CD4-positive, alpha-beta memory T cell (primary cell): ENCODE measurements at regions of chr10 and their contacts with region 1.

Region 1: DNA sequence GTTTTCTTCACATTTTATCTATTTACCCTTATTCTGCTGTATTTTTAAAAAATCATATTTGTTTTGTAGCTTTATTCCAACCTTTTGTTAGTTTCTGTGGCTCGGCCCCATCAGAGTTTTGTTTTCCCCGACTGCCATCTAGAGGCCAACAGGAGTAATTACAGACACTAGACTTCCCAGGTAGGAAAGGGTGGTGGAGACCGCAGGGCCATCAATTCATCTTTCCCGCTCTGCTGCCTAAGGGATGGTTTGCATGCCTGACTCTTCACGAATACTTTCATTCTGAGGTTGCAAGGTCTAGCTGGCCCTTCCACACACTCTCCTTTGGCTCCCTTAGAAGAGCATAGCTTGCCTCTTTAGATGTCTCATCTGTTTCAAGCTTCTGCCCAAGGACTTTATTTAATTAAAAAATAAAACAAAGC is 38.3 kb downstream of the LYZL2 start:
- DNase-seq: peak in 4 of 5 donors; percentile 48 to 60 (median 54)
- H3K4me3 ChIP-seq: no peak overlapping the region
- H3K4me3 Mint-ChIP-seq: no peak overlapping the region
- H3K27ac ChIP-seq: no peak overlapping the region
- H3K27ac Mint-ChIP-seq: no peak overlapping the region
- H3K4me1 ChIP-seq: no peaks in the 10 kb centered on the region
- H3K4me1 Mint-ChIP-seq: peaks cover 0 to 2% (median 0%) of the 10 kb centered on the region in 4 donors
- H3K27me3 ChIP-seq: no peaks in the 10 kb centered on the region
- H3K27me3 Mint-ChIP-seq: peaks cover 8 to 16% of the 10 kb centered on the region in 2 donors

Region 2: GRCh38 chr10:29998142-29998808 is 593.0 kb before region 1 on chr10:
- CTCF ChIA-PET with region 1: interaction called, 31 read pairs
- POLR2A ChIA-PET with region 1: no interaction called
- intact Hi-C with region 1: loop called (anchors 1 kb)
- DNase-seq: peak; percentile 68 to 74 (median 71)
- H3K4me3 ChIP-seq: no peak overlapping the region
- H3K4me3 Mint-ChIP-seq: no peak overlapping the region
- H3K27ac ChIP-seq: no peak overlapping the region
- H3K27ac Mint-ChIP-seq: no peak overlapping the region
- H3K4me1 ChIP-seq: peaks cover 12% of the 10 kb centered on the region
- H3K4me1 Mint-ChIP-seq: peaks cover 5 to 15% (median 9%) of the 10 kb centered on the region in 4 donors
- H3K27me3 ChIP-seq: no peaks in the 10 kb centered on the region
- H3K27me3 Mint-ChIP-seq: peaks cover 42 to 44% of the 10 kb centered on the region in 2 donors

Region 3: GRCh38 chr10:30048768-30049517 is 542.3 kb before region 1 on chr10:
- CTCF ChIA-PET with region 1: no interaction called
- POLR2A ChIA-PET with region 1: no interaction called
- intact Hi-C with region 1: no loop called
- DNase-seq: no peak
- H3K4me3 ChIP-seq: no peak overlapping the region
- H3K4me3 Mint-ChIP-seq: peak overlapping the region in 7 of 8 donors; percentile 2 to 85 (median 41)
- H3K27ac ChIP-seq: no peak overlapping the region
- H3K27ac Mint-ChIP-seq: no peak overlapping the region
- H3K4me1 ChIP-seq: peaks cover 24% of the 10 kb centered on the region
- H3K4me1 Mint-ChIP-seq: peaks cover 18 to 30% (median 23%) of the 10 kb centered on the region in 4 donors
- H3K27me3 ChIP-seq: peaks cover 8% of the 10 kb centered on the region
- H3K27me3 Mint-ChIP-seq: peaks cover 54 to 56% of the 10 kb centered on the region in 2 donors

Region 4: GRCh38 chr10:30359373-30360206 is 231.7 kb before region 1 on chr10:
- CTCF ChIA-PET with region 1: interaction called, 40 read pairs
- POLR2A ChIA-PET with region 1: interaction called, 5 read pairs
- intact Hi-C with region 1: loop called (anchors 1 kb)
- DNase-seq: peak; percentile 42 to 53 (median 47)
- H3K4me3 ChIP-seq: no peak overlapping the region
- H3K4me3 Mint-ChIP-seq: peak overlapping the region in 1 of 8 donors; percentile 9
- H3K27ac ChIP-seq: no peak overlapping the region
- H3K27ac Mint-ChIP-seq: no peak overlapping the region
- H3K4me1 ChIP-seq: peaks cover 4% of the 10 kb centered on the region
- H3K4me1 Mint-ChIP-seq: peaks cover 0 to 6% (median 0%) of the 10 kb centered on the region in 4 donors
- H3K27me3 ChIP-seq: no peaks in the 10 kb centered on the region
- H3K27me3 Mint-ChIP-seq: peaks cover 0 to 14% of the 10 kb centered on the region in 2 donors

Region 5: GRCh38 chr10:30398788-30399187 is 192.5 kb before region 1 on chr10:
- CTCF ChIA-PET with region 1: interaction called, 217 read pairs
- POLR2A ChIA-PET with region 1: no interaction called
- intact Hi-C with region 1: no loop called
- DNase-seq: no peak
- H3K4me3 ChIP-seq: no peak overlapping the region
- H3K4me3 Mint-ChIP-seq: peak overlapping the region in 1 of 8 donors; percentile 41
- H3K27ac ChIP-seq: no peak overlapping the region
- H3K27ac Mint-ChIP-seq: no peak overlapping the region
- H3K4me1 ChIP-seq: peaks cover 21% of the 10 kb centered on the region
- H3K4me1 Mint-ChIP-seq: peaks cover 12 to 16% (median 15%) of the 10 kb centered on the region in 4 donors
- H3K27me3 ChIP-seq: no peaks in the 10 kb centered on the region
- H3K27me3 Mint-ChIP-seq: peaks cover 2 to 6% of the 10 kb centered on the region in 2 donors

Region 6: GRCh38 chr10:30420266-30420665 is 171.0 kb before region 1 on chr10:
- CTCF ChIA-PET with region 1: interaction called, 10 read pairs
- POLR2A ChIA-PET with region 1: no interaction called
- intact Hi-C with region 1: no loop called
- DNase-seq: no peak
- H3K4me3 ChIP-seq: no peak overlapping the region
- H3K4me3 Mint-ChIP-seq: no peak overlapping the region
- H3K27ac ChIP-seq: no peak overlapping the region
- H3K27ac Mint-ChIP-seq: no peak overlapping the region
- H3K4me1 ChIP-seq: peaks cover 15% of the 10 kb centered on the region
- H3K4me1 Mint-ChIP-seq: peaks cover 10 to 22% (median 15%) of the 10 kb centered on the region in 4 donors
- H3K27me3 ChIP-seq: no peaks in the 10 kb centered on the region
- H3K27me3 Mint-ChIP-seq: no peaks in the 10 kb centered on the region

Region 7: GRCh38 chr10:30734901-30735300 is 143.6 kb after region 1 on chr10:
- CTCF ChIA-PET with region 1: no interaction called
- POLR2A ChIA-PET with region 1: no interaction called
- intact Hi-C with region 1: no loop called
- DNase-seq: no peak
- H3K4me3 ChIP-seq: no peak overlapping the region
- H3K4me3 Mint-ChIP-seq: no peak overlapping the region
- H3K27ac ChIP-seq: no peak overlapping the region
- H3K27ac Mint-ChIP-seq: no peak overlapping the region
- H3K4me1 ChIP-seq: no peaks in the 10 kb centered on the region
- H3K4me1 Mint-ChIP-seq: no peaks in the 10 kb centered on the region
- H3K27me3 ChIP-seq: no peaks in the 10 kb centered on the region
- H3K27me3 Mint-ChIP-seq: peaks cover 4 to 8% of the 10 kb centered on the region in 2 donors